ENCODE measurements at regions of chr6 and their contacts with region 1.

Region 1: GRCh38 chr6:53718597-53719460 is 53.3 kb upstream of the KLHL31 start:
- DNase-seq: no peak
- ATAC-seq: peak; percentile 84
- H3K4me3 Mint-ChIP-seq: no peak overlapping the region
- H3K27ac Mint-ChIP-seq: no peak overlapping the region
- H3K4me1 Mint-ChIP-seq: peaks cover 7% of the 10 kb centered on the region
- H3K27me3 Mint-ChIP-seq: no peaks in the 10 kb centered on the region
- CTCF ChIP-seq: peak; percentile 63

Region 2: GRCh38 chr6:53492860-53493634 is 225.8 kb before region 1 on chr6:
- CTCF ChIA-PET with region 1: interaction called, 32 read pairs
- POLR2A ChIA-PET with region 1: no interaction called
- DNase-seq: peak; percentile 11
- ATAC-seq: peak; percentile 69
- H3K4me3 Mint-ChIP-seq: no peak overlapping the region
- H3K27ac Mint-ChIP-seq: no peak overlapping the region
- H3K4me1 Mint-ChIP-seq: no peaks in the 10 kb centered on the region
- H3K27me3 Mint-ChIP-seq: no peaks in the 10 kb centered on the region; the same call in 1 of the 2 replicates
- CTCF ChIP-seq: 0 out of 2 replicates have a peak, but pooled peaks have one; percentile 26

Region 3: GRCh38 chr6:53664623-53665022 is 54.2 kb before region 1 on chr6:
- CTCF ChIA-PET with region 1: interaction called, 11 read pairs
- POLR2A ChIA-PET with region 1: no interaction called
- DNase-seq: no peak
- ATAC-seq: no peak
- H3K4me3 Mint-ChIP-seq: no peak overlapping the region
- H3K27ac Mint-ChIP-seq: no peak overlapping the region
- H3K4me1 Mint-ChIP-seq: peaks cover 8% of the 10 kb centered on the region
- H3K27me3 Mint-ChIP-seq: peaks cover 1% of the 10 kb centered on the region; the same call in 1 of the 2 replicates
- CTCF ChIP-seq: no peak

Region 4: DNA sequence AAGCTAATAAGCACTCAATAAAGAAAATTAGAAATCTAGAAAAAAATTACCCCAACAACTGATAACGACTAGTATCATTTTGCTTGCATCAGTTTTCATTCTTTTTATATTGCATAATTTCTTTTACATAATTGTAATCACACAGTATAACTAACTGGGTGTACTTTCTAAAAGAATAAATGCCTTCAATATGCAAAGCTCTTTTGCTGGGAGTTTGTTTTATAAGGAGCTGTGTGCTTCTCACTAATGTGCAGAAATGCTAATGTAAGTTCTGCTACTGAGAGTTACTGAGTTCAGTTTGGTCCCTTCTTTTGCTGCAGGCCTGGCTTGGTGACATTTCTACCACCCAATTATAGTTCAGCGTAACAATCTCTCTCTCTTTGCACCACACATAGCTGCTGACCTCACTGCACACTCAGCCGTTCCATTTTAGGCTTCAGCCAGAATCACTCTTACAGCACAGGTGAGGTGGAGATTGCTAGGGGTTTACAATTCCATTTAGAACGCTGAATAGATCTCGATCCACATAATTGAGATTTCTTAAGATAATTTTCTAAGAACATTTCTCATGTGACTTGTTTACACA is 32.4 kb before region 1 on chr6:
- CTCF ChIA-PET with region 1: interaction called, 15 read pairs
- POLR2A ChIA-PET with region 1: no interaction called
- DNase-seq: no peak
- ATAC-seq: no peak
- H3K4me3 Mint-ChIP-seq: no peak overlapping the region
- H3K27ac Mint-ChIP-seq: no peak overlapping the region
- H3K4me1 Mint-ChIP-seq: no peaks in the 10 kb centered on the region
- H3K27me3 Mint-ChIP-seq: no peaks in the 10 kb centered on the region; the same call in 1 of the 2 replicates
- CTCF ChIP-seq: no peak

Region 5: DNA sequence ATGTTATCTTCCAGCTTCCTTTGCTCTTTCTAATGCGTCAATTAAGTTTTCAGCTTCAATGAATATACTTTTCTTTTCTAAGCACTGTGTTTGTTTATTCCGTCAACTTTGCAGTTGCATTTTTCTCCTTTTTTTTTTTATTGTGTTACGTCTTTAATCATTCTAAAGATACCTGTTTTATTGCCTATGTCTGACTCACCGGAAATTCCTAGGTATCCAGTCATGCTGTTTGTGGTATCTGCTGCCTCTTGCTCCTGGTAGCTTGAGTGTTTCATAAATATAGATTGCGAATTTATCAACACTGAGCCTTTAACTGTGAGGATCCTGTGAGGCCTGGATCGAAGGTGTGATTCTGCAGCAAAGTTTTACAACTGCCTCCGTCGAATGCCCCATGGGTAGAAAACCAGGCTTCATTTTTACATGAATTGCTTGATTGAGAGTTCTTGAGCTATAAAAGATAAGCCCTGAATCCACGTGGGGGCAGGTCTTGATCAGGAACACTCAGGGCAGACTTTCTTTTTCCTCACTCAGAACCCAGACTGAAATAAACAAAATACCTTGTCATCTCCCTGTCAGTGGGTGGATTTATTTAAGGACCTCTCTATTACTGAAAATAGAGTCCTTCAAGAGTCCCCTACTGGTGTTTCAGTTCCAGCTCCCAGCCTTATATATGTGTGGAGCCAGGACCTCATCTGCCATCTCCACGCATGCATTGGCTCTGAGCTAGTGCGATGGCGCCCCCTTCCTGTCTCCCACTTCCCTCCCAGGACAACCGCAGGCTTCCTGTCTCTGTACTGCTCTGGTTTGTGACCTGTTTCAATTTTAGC is 15.9 kb after region 1 on chr6:
- CTCF ChIA-PET with region 1: interaction called, 106 read pairs
- POLR2A ChIA-PET with region 1: no interaction called
- DNase-seq: peak; percentile 72
- ATAC-seq: peak; percentile 99
- H3K4me3 Mint-ChIP-seq: no peak overlapping the region
- H3K27ac Mint-ChIP-seq: no peak overlapping the region
- H3K4me1 Mint-ChIP-seq: peaks cover 35% of the 10 kb centered on the region
- H3K27me3 Mint-ChIP-seq: no peaks in the 10 kb centered on the region
- CTCF ChIP-seq: peak; percentile 33; the same call in 1 of the 2 replicates

Region 6: DNA sequence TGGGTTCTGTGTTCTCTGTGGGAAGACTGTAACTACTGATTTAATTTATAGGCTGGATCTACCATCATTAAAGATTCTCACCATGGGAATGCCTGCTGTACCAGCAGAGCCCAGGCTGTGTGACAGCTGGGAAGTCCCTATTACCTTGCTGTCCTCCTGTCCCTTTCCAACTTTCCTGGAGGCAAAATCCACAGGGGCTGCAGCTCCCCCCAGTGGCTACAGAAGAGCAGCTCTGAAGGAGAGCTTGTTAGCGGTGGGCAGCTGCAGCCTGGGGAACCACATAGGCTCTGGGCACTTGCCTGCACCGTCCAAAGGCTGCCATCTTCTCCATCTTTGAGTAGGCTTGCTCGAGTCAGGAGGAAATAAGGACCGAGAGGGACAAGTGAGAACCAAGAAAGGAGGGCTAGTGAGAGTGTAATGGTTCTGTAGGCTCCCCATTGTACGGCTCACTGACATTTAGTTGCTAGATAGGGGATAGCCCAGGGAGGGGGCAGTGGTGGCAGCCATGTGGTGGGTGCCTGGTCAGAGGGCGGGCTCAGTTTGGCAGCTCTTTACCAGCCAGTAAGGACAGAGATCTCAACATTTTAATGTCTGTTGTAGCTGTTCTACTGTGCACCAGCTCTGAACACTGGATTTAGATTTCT is 237.4 kb after region 1 on chr6:
- CTCF ChIA-PET with region 1: interaction called, 63 read pairs
- POLR2A ChIA-PET with region 1: no interaction called
- DNase-seq: peak; percentile 80
- ATAC-seq: peak; percentile 100
- H3K4me3 Mint-ChIP-seq: no peak overlapping the region
- H3K27ac Mint-ChIP-seq: no peak overlapping the region
- H3K4me1 Mint-ChIP-seq: no peaks in the 10 kb centered on the region
- H3K27me3 Mint-ChIP-seq: no peaks in the 10 kb centered on the region
- CTCF ChIP-seq: no peak